ENCODE measurements at regions of chr3 and their contacts with region 1.

Region 1: GRCh38 chr3:52056968-52057805 is 816 bp upstream of the DUSP7 start:
- DNase-seq: peak; percentile 100
- H3K4me3 ChIP-seq: peak overlapping the region; percentile 42 to 96 (median 68)
- H3K27ac ChIP-seq: peak overlapping the region; percentile 50 to 99 (median 93)
- H3K27me3 ChIP-seq: no peaks in the 10 kb centered on the region
- CTCF ChIP-seq: peak in 22 of 56 donors; percentile 3 to 40 (median 19)

Region 2: DNA sequence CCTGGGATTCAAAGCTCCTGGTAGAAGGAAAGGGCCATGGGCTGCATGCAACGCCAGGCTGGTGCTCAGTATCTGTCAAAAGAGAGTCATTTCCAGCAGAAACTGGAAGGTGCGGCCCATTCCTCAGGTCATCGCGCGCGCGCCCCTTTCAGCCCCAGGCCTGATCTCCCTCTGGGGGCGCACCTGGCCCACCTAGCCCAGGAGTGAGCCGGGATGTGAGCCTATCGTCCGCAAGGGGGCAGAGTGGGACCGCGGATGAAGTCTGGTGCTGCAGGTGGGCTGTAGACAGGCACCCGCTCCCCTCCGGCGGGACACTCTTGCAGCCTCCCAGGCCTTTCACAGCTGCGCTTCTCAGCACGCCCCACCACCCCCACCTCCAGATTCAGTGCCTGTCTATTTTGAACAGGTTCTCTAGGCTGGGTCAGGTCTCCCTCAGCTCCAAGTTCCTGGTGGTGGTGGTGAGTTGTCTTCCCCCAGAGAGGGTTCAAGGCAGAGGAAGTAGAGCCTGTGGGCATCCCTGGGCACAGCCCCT is 55.7 kb before region 1 on chr3:
- intact Hi-C with region 1: loop called (anchors 1 to 2 kb)
- DNase-seq: peak; percentile 73 to 90 (median 80)
- H3K4me3 ChIP-seq: peak overlapping the region in 3 of 59 donors; percentile 3 to 12 (median 7)
- H3K27ac ChIP-seq: peak overlapping the region in 17 of 59 donors; percentile 1 to 72 (median 41)
- H3K27me3 ChIP-seq: no peaks in the 10 kb centered on the region
- CTCF ChIP-seq: peak; percentile 68 to 99 (median 96)

Region 3: DNA sequence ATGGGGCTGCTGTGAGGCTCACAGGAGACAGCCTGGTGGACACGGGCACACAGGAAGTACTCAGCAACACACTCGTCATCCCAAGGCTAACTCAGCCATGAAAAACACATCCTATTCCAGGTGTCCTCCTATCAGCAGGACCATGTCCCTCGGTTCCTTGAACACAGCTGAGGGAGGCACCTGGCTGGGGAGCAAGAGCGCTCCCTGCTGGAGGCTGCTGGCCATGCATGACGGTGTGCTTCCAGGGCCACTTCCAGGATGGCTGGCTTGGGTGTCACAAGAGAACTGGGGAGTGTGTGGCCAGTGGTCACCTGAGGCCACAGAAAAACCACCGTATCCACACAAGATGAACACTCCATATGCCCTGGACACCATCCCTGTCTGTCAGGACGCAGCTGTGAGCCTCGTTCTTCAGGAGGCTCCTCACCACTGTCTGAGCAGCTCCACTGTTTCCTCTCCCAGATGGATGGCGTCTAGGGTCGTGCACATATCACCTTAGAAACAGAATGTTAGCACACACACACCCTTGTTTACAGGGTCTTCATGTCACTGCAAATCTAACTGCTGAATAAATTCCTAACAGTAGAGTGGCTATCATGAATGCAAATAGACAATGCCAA is 66.0 kb after region 1 on chr3:
- intact Hi-C with region 1: loop called (anchors 1 to 2 kb)
- DNase-seq: peak; percentile 74 to 88 (median 82)
- H3K4me3 ChIP-seq: no peak overlapping the region
- H3K27ac ChIP-seq: peak overlapping the region in 50 of 59 donors; percentile 6 to 98 (median 66)
- H3K27me3 ChIP-seq: no peaks in the 10 kb centered on the region
- CTCF ChIP-seq: peak; percentile 82 to 99 (median 96)

Region 4: DNA sequence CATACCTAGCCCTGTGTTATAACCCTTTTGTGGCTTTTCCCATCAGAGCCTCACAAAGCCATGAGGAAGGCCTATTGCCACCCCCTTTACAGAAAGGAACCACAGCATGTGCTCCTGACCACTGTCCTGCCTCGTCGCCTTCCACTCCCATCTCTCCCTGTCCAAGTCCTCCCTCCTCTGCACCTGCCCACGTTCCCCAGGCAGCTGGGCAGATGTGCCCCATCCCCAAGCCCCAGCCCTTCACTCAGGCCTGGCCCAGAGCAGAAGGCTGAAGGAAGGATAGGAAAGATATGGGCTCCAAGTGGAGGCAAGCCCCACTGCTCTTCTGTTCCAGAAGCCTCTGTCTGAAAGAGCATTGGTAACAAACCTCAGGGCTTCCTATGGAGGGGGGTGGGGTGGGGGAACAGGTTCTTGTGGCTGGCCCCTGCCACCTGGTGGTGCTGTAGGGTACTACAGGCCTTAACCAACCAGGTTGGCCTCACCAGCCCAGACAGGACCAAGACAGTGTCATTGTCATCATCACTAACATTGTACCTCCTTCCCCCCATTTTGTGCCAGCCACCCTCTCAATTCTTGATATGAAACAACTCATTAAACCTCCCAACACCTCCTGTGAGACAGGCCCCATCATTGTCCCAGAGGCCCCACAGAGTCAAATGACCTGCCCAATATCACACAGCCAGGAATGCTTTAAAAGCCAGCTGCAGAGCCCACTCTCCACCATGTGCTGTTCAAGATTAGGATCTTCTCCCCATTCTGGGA is 87.0 kb after region 1 on chr3:
- intact Hi-C with region 1: loop called (anchors 5 kb)
- DNase-seq: peak; percentile 82 to 93 (median 86)
- H3K4me3 ChIP-seq: no peak overlapping the region
- H3K27ac ChIP-seq: peak overlapping the region in 37 of 59 donors; percentile 7 to 91 (median 60)
- H3K27me3 ChIP-seq: no peaks in the 10 kb centered on the region
- CTCF ChIP-seq: peak; percentile 90 to 100 (median 99)

Region 5: GRCh38 chr3:52197842-52198668 is 140.9 kb after region 1 on chr3 and contains the start of gene ALAS1:
- intact Hi-C with region 1: loop called in 1 of 2 experiments (anchors 5 kb)
- DNase-seq: peak; percentile 83 to 96 (median 84)
- H3K4me3 ChIP-seq: peak within 1 kb of the TSS; percentile 62 to 100 (median 97)
- H3K27ac ChIP-seq: peak within 1 kb of the TSS in 58 of 59 donors; percentile 75 to 96 (median 89)
- H3K27me3 ChIP-seq: no peaks in the 10 kb centered on the region
- CTCF ChIP-seq: peak in 39 of 56 donors; percentile 8 to 52 (median 31)
- total RNA-seq, gene ALAS1: 34.8 to 81.1 (median 55.4) TPM